Adrenal gland (tissue), 19 donors: ENCODE measurements at regions of chr1 and their contacts with region 1.

Region 1: DNA sequence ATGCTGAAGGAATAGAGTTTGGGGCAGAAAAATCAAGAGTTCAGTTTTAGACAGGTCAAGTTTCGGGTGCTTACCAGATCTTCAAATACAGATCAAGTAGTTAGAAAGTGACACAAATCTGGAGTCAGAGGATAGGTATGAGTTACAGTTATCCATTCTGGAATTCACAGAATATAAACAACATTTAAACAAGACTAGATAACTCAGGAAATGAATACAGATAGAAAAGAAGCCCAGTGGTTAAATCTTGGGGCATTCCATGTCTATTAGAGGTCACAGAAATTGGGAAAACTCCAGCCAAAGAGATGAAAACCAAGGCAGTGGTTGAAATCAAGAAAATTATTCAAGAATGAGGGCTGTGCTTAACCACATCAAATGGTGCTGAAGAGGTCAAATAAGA is 187.0 kb upstream of the HP1BP3 start:
- DNase-seq: no peak
- H3K4me3 ChIP-seq: no peak overlapping the region
- H3K27ac ChIP-seq: no peak overlapping the region
- H3K4me1 ChIP-seq: no peaks in the 10 kb centered on the region
- H3K27me3 ChIP-seq: no peaks in the 10 kb centered on the region
- CTCF ChIP-seq: no peak
- POLR2A ChIP-seq: no peak

Region 2: DNA sequence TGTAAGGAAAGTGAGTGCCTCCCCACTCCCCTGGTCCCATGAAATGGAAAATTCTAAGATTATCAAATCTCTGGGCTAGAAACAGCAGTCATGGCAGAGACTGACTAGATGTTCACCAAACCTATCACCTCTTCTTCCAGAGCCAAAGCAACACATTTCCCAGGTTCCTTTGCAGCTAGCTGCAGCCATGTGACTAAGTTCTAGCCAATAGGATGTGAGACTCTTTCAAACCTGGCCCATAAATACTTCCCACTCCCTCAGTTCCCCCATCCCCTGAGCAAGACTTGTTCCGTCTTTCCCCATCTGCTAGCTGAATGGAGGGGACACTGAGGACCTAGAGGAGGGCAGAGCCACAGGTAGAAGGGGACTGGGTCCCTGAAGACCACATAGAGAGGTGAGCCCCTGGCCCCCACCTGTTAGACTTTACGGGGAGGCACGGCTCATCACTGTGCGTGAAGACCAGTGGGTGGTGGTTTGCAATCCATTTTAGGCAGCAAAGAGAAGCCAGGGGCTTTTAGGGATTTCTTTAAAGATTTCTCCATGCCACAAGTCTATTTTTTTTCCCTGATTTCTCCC is 404.5 kb before region 1 on chr1:
- intact Hi-C with region 1: no loop called
- DNase-seq: no peak
- H3K4me3 ChIP-seq: no peak overlapping the region
- H3K27ac ChIP-seq: no peak overlapping the region
- H3K4me1 ChIP-seq: no peaks in the 10 kb centered on the region
- H3K27me3 ChIP-seq: no peaks in the 10 kb centered on the region
- CTCF ChIP-seq: no peak
- POLR2A ChIP-seq: no peak

Region 3: DNA sequence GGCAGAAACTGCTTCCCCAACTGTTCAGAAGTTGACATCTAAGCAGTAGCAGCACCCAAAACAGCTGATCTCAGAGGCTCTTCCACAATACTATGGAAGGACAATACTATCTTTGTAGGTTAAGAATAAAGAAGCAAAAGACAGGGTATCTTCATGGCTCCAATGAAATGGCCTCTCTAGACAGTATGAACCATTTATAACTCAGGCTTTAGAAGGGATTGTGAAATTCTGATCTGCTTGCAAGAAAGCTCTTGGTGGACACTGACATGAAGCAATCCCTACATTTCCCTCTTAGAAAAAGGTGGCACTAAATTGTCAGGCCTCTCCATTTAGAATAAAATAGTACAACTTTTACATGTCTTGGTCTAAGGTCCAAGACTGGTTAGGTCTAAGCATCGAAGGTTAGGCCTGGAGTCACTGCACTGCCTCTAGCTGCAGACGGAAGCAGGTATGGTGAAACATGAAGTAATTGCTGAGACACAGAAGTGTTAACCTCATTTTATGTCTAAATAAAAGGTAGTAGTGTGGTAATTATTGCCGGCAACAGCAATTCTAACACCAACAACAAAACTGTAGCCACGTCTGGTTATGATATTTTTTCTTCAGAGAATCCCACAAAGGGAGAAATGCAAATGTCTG is 136.4 kb before region 1 on chr1:
- intact Hi-C with region 1: loop called in 1 of 2 experiments (anchors 10 kb)
- DNase-seq: no peak
- H3K4me3 ChIP-seq: no peak overlapping the region
- H3K27ac ChIP-seq: no peak overlapping the region
- H3K4me1 ChIP-seq: no peaks in the 10 kb centered on the region
- H3K27me3 ChIP-seq: no peaks in the 10 kb centered on the region
- CTCF ChIP-seq: no peak
- POLR2A ChIP-seq: no peak